MCF 10A (cell line): ENCODE measurements at regions of chr18 and their contacts with region 1.

Region 1: DNA sequence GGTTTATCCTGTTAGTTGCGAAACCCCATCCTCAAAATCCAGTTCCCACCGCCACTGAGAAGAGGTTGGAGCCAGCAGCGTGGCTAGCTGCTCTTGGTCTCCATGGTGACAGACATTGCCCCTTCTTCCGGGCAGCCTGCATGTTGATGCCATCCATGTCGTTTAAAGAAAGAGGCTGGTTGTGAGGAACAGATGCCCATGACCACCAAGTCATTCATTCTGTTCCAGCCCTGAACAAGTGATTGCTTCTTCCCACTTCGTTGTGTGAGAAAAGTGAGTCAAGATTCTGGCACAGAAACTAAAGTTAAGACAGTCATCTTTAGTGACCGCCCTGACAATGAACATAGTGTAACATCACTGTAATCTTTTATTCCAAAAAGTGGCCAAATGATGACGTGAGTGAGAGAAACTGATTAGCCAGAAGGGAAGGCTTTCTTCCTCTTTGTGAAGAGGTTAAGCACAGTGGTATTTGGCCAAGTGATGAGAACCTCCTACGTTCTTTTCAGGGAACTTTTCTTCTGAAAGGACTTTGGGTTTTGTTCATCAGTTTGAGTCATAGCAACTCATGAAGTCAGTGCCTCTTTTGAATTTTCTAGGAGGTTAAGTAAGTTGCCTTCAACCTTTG is 272.5 kb downstream of the GALR1 start:
- DNase-seq: no peak
- H3K4me3 Mint-ChIP-seq: no peak overlapping the region
- H3K27ac Mint-ChIP-seq: peak overlapping the region; percentile 52
- H3K4me1 Mint-ChIP-seq: peaks cover 5% of the 10 kb centered on the region
- H3K27me3 Mint-ChIP-seq: no peaks in the 10 kb centered on the region
- CTCF ChIP-seq: no peak

Region 2: GRCh38 chr18:77560341-77560992 is 38.3 kb after region 1 on chr18:
- CTCF ChIA-PET with region 1: no interaction called
- POLR2A ChIA-PET with region 1: no interaction called
- intact Hi-C with region 1: loop called (anchors 1 kb)
- DNase-seq: no peak
- H3K4me3 Mint-ChIP-seq: no peak overlapping the region
- H3K27ac Mint-ChIP-seq: peak overlapping the region; percentile 62
- H3K4me1 Mint-ChIP-seq: peaks cover 23% of the 10 kb centered on the region
- H3K27me3 Mint-ChIP-seq: no peaks in the 10 kb centered on the region
- CTCF ChIP-seq: no peak